WTC11 (cell line): ENCODE measurements at regions of chr11 and their contacts with region 1.

Region 1: GRCh38 chr11:124758317-124759203 is 3.5 kb downstream of the ESAM start:
- DNase-seq: peak; percentile 95
- ATAC-seq: peak; percentile 75
- H3K4me3 Mint-ChIP-seq: peak overlapping the region; percentile 84
- H3K27ac Mint-ChIP-seq: no peak overlapping the region
- H3K4me1 Mint-ChIP-seq: peaks cover 57% of the 10 kb centered on the region
- H3K27me3 Mint-ChIP-seq: peaks cover 95% of the 10 kb centered on the region
- CTCF ChIP-seq: peak; percentile 44; the same call in 1 of the 2 replicates

Region 2: GRCh38 chr11:124570160-124570559 is 188.4 kb before region 1 on chr11:
- CTCF ChIA-PET with region 1: no interaction called
- POLR2A ChIA-PET with region 1: no interaction called
- DNase-seq: no peak
- ATAC-seq: no peak
- H3K4me3 Mint-ChIP-seq: no peak overlapping the region
- H3K27ac Mint-ChIP-seq: no peak overlapping the region
- H3K4me1 Mint-ChIP-seq: peaks cover 5% of the 10 kb centered on the region; the same call in 1 of the 2 replicates
- H3K27me3 Mint-ChIP-seq: no peaks in the 10 kb centered on the region; the same call in 1 of the 2 replicates
- CTCF ChIP-seq: no peak

Region 3: DNA sequence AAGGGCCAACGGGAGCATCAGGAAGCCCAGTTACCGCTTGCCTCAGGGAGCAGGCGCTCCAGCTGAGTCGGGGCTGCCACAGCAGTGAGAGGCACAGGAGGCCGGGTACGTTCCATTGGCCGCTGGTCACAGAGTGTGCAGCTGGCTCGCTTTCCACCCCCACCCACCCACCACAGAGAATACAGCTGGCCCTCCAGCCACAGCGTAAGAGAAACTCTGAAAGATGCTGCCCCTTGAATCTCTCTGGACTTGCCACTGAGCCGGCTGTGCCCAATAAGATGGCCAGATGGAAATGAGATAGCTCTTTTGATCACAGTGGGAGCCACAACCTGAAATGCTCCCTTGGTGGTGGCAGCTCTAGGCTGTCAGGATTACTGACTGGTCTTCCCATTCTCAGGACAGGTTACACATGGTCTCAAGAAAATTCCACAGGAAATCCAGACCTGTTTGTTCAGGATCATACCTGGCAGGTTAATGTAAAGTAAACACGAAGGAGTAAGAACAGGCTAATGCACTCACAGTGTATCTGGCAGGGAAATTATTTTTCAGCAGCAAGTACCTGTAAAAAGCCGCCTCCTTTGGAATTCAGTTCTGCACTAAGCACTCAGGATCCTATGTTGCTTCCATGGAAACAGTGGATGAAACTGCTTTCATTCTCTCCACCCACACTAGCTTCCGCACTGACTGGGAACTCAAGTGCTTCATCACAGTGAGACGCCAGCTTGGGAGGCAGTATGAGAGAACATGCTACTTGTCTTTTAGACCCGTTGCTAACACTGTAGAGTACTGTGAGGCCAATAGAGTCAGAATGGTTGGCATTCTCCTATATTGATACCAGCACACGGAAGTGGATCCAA is 101.6 kb before region 1 on chr11:
- CTCF ChIA-PET with region 1: interaction called, 11 read pairs
- POLR2A ChIA-PET with region 1: interaction called, 3 read pairs
- DNase-seq: peak; percentile 31
- ATAC-seq: peak; percentile 82
- H3K4me3 Mint-ChIP-seq: 0 out of 2 replicates have a peak overlapping the region, but pooled peaks have one; percentile 6
- H3K27ac Mint-ChIP-seq: 0 out of 2 replicates have a peak overlapping the region, but pooled peaks have one; percentile 18
- H3K4me1 Mint-ChIP-seq: peaks cover 20% of the 10 kb centered on the region
- H3K27me3 Mint-ChIP-seq: peaks cover 3% of the 10 kb centered on the region
- CTCF ChIP-seq: no peak

Region 4: DNA sequence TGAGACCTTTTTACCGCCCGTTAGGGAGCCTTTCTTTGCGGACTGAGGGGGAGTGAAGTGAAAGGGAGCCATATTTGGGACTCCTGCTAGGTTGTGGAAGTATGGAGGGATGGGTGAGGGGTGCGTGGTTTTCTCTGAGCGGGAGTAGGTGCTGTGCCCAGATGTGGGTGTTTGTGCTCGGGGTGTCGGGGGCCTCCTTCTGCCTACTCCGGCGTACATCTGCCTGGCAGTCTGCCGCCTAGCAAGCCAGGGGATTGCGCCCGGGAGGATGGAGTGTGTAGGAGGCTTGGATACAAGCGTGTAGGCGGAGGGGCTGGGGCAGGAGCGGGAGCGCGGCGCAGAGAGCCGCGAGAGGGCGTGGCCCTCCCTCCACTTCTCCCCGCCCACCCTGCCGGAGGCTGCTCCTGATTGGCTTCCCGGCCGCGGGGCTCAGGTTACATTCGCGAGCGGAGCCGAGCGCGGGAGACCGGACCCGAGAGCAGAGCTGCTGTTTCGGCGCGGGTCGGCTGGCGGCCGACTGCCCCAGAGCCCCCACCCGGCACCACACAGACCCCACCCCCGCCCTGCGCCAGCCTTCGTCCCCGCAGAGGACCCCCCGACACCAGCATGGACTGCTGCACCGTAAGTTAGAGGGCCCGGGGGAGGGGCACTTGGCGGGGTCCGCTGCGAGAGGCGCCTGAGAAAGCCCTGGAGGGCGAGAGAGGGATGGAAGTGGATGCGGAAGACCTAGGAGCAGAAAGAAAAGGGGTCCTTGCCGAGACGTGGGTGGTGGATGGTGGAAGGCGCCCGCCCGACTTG is 18.9 kb before region 1 on chr11 and contains the start of gene NRGN:
- CTCF ChIA-PET with region 1: interaction called, 14 read pairs
- POLR2A ChIA-PET with region 1: no interaction called
- DNase-seq: peak; percentile 97
- ATAC-seq: peak; percentile 95
- H3K4me3 Mint-ChIP-seq: peak within 1 kb of the TSS; percentile 77
- H3K27ac Mint-ChIP-seq: no peak within 1 kb of the TSS
- H3K4me1 Mint-ChIP-seq: peaks cover 25% of the 10 kb centered on the region
- H3K27me3 Mint-ChIP-seq: peaks cover 99% of the 10 kb centered on the region
- CTCF ChIP-seq: no peak
- total RNA-seq, gene NRGN: 1.9 to 2.9 TPM (median 2.5 TPM) in 3 replicates

Region 5: GRCh38 chr11:124778281-124778680 is 19.7 kb after region 1 on chr11:
- CTCF ChIA-PET with region 1: interaction called, 17 read pairs
- POLR2A ChIA-PET with region 1: interaction called, 3 read pairs
- DNase-seq: no peak
- ATAC-seq: peak; percentile 34; the same call in 1 of the 2 replicates
- H3K4me3 Mint-ChIP-seq: no peak overlapping the region
- H3K27ac Mint-ChIP-seq: no peak overlapping the region
- H3K4me1 Mint-ChIP-seq: no peaks in the 10 kb centered on the region
- H3K27me3 Mint-ChIP-seq: no peaks in the 10 kb centered on the region
- CTCF ChIP-seq: no peak

Region 6: GRCh38 chr11:124793466-124794278 is 35.1 kb after region 1 on chr11:
- CTCF ChIA-PET with region 1: interaction called, 50 read pairs
- POLR2A ChIA-PET with region 1: no interaction called
- DNase-seq: peak; percentile 25
- ATAC-seq: peak; percentile 82
- H3K4me3 Mint-ChIP-seq: peak overlapping the region; percentile 50
- H3K27ac Mint-ChIP-seq: peak overlapping the region; percentile 22; the same call in 1 of the 2 replicates
- H3K4me1 Mint-ChIP-seq: peaks cover 76% of the 10 kb centered on the region
- H3K27me3 Mint-ChIP-seq: no peaks in the 10 kb centered on the region
- CTCF ChIP-seq: peak; percentile 51

Region 7: GRCh38 chr11:124837491-124837856 is 78.9 kb after region 1 on chr11:
- CTCF ChIA-PET with region 1: interaction called, 44 read pairs
- POLR2A ChIA-PET with region 1: interaction called, 3 read pairs
- DNase-seq: no peak
- ATAC-seq: peak; percentile 40
- H3K4me3 Mint-ChIP-seq: no peak overlapping the region
- H3K27ac Mint-ChIP-seq: no peak overlapping the region
- H3K4me1 Mint-ChIP-seq: peaks cover 32% of the 10 kb centered on the region
- H3K27me3 Mint-ChIP-seq: peaks cover 34% of the 10 kb centered on the region
- CTCF ChIP-seq: no peak; the same call in 1 of the 2 replicates

Region 8: GRCh38 chr11:124946735-124947141 is 188.2 kb after region 1 on chr11:
- CTCF ChIA-PET with region 1: no interaction called
- POLR2A ChIA-PET with region 1: no interaction called
- DNase-seq: no peak
- ATAC-seq: no peak
- H3K4me3 Mint-ChIP-seq: no peak overlapping the region
- H3K27ac Mint-ChIP-seq: no peak overlapping the region
- H3K4me1 Mint-ChIP-seq: no peaks in the 10 kb centered on the region
- H3K27me3 Mint-ChIP-seq: peaks cover 23% of the 10 kb centered on the region
- CTCF ChIP-seq: no peak